Caco-2 (cell line): ENCODE measurements at regions of chr6 and their contacts with region 1.

Region 1: DNA sequence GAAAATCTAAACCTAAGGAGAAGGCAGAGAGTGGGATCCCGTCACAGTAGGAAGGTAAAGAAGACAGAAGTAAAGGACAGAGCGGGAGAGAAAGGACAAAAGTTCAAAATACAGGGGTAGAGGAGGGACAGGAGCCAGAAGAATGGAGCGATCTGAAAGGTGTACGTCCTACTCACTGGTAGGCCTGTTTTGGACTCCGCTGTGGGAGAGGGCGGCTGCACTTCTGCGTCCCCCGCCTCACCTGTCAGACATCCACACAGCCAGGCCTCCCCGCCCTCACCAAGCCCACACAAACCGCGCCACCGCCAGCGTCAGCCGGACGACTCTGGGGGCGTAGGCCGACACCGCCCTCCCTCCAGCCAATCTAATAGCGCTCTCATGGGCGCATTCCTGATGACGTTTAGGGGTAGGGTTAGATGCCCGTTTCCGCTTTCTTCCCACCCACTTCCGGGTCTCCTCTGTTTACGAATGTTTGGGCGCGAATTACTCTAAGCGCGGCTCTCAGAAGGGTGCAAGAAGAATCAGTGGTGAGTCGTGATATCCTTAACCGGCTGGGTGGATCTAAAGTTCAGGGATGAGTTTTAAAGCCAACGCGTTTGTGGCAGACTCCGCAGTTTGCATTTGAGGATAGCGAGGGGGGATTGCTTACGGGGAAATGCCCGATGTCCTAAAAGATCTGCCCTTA is at the starts of genes CENPQ and MMUT:
- DNase-seq: peak; percentile 93 to 94
- H3K4me3 ChIP-seq: peak within 1 kb of the TSS; percentile 53
- H3K4me3 Mint-ChIP-seq: peak within 1 kb of the TSS; percentile 86
- H3K27ac Mint-ChIP-seq: peak within 1 kb of the TSS; percentile 99
- H3K4me1 ChIP-seq: peaks cover 5% of the 10 kb centered on the region; the same call in 1 of the 2 replicates
- H3K4me1 Mint-ChIP-seq: no peaks in the 10 kb centered on the region
- H3K27me3 ChIP-seq: no peaks in the 10 kb centered on the region
- H3K27me3 Mint-ChIP-seq: no peaks in the 10 kb centered on the region
- CTCF ChIP-seq: no peak
- total RNA-seq, gene CENPQ: 12.4 and 13.4 TPM in 2 replicates
- total RNA-seq, gene MMUT: 11.1 and 12.1 TPM in 2 replicates

Region 2: GRCh38 chr6:49519660-49520059 is 56.6 kb after region 1 on chr6:
- CTCF ChIA-PET with region 1: no interaction called
- POLR2A ChIA-PET with region 1: no interaction called
- intact Hi-C with region 1: loop called (anchors 5 kb)
- DNase-seq: no peak
- H3K4me3 ChIP-seq: no peak overlapping the region
- H3K4me3 Mint-ChIP-seq: no peak overlapping the region
- H3K27ac Mint-ChIP-seq: no peak overlapping the region
- H3K4me1 ChIP-seq: peaks cover 14% of the 10 kb centered on the region
- H3K4me1 Mint-ChIP-seq: peaks cover 6% of the 10 kb centered on the region
- H3K27me3 ChIP-seq: no peaks in the 10 kb centered on the region
- H3K27me3 Mint-ChIP-seq: no peaks in the 10 kb centered on the region
- CTCF ChIP-seq: no peak